ENCODE measurements at regions of chr1 and their contacts with region 1.

Region 1: DNA sequence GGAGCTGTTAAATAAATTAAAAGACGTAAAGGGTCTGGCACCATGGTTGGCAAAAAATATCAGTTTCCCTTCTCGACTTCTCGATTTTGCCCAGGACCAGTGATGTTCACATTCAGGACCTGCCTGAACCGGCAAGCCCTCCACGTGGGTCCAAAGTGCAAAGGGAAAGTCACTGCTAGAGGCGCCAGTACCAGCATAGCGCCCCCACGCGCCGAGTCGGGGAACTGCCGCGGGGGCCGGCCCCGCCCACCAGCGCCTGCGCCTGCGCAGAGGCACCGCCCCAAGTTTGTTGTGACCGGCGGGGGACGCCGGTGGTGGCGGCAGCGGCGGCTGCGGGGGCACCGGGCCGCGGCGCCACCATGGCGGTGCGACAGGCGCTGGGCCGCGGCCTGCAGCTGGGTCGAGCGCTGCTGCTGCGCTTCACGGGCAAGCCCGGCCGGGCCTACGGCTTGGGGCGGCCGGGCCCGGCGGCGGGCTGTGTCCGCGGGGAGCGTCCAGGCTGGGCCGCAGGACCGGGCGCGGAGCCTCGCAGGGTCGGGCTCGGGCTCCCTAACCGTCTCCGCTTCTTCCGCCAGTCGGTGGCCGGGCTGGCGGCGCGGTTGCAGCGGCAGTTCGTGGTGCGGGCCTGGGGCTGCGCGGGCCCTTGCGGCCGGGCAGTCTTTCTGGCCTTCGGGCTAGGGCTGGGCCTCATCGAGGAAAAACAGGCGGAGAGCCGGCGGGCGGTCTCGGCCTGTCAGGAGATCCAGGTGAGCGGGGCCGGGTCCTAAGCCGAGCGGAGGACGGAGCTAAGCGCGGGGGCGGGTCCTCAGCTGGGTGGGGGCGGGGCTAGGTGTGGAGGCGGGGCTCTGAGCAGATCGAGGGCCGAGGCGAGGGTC is at the start of gene PINK1:
- DNase-seq: peak; percentile 73 to 98 (median 79)

Region 2: DNA sequence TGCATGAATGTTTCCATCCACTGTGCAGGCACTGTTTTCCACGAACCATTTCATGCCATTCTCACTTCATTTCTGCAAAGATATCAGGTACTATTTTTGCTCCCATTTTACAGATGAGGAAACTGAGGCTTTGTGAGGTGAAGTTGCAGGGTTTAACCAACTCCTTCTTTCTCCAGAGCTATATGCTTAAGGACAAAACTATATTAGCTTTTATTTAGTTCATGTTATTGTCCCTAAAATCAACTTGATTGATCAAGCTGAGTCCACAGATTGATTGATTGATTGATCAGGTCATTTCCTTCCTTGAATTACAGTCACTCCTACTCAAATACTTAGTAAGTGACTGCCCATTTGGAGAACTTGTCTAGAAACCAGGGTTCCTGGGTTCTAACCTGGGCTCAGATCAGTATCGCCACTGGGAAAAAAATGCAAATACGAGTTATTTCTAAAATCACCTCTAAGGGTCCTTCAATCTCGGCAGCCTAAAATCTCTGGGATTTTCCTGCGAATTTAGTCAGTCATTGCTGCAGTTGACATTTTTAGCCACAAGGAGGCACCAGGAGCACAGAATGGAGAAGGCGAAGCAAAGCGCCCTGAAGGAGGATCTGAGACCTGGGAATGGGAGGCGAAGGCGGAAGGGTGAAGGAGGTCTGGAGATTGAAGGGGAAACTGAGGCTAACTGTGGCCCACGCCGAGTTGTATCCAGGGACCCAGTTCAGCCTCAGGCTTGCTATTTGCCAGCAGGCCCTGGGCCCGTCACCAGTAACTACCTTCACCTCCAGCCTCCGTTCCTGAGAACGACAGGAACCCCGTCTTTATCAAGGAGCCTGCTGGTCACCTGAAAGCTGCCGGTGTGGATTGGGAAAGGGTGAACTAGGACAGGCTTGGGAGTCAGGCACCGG is 111.2 kb before region 1 on chr1:
- intact Hi-C with region 1: loop called (anchors 5 kb)
- DNase-seq: peak in 9 of 10 donors; percentile 22 to 92 (median 72)